ENCODE measurements at regions of chr17 and their contacts with region 1.

Region 1: DNA sequence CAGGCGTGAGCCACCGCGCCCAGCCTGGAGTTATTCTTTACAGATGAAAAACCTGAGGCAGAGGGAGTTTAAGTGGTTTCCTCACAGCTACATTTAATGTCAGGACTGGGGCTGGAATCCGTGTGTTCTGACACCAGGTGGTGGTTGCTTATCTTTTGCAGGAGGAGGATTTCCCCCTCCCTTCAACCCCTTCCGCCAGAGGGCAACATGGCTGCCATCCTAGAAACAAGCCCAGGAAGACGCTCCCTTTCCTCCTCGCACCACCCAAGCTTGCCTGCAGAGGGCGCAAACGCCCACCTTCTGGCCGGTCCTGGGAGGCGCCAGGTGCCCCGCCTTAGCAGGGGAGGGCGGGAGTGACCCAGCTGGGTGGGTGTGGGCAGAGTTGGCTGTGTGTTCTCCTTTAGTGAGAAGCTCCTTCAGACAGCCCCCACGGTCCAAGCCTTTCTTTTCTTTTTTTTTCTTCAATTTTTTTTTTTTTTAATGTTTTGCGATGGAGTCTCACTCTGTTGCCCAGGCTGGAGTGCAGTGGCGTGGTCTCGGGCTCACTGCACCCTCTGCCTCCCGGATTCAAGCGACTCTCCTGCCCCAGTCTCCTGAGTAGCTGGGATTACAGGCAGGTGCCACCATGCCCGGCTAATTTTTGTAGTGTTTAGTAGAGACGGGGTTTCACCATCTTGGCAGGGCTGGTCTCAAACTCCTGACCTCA is 9.9 kb upstream of the RAP1GAP2 start:
- DNase-seq: peak; percentile 86 to 91 (median 87)
- H3K4me3 ChIP-seq: no peak overlapping the region
- H3K4me3 Mint-ChIP-seq: peak overlapping the region in 1 of 7 donors; percentile 32
- H3K27ac ChIP-seq: no peak overlapping the region
- H3K27ac Mint-ChIP-seq: peak overlapping the region in 1 of 8 donors; percentile 20
- H3K4me1 ChIP-seq: peaks cover 17% of the 10 kb centered on the region
- H3K4me1 Mint-ChIP-seq: peaks cover 13 to 18% (median 13%) of the 10 kb centered on the region in 3 donors
- H3K27me3 ChIP-seq: no peaks in the 10 kb centered on the region
- H3K27me3 Mint-ChIP-seq: peaks cover 0 to 2% of the 10 kb centered on the region in 2 donors

Region 2: DNA sequence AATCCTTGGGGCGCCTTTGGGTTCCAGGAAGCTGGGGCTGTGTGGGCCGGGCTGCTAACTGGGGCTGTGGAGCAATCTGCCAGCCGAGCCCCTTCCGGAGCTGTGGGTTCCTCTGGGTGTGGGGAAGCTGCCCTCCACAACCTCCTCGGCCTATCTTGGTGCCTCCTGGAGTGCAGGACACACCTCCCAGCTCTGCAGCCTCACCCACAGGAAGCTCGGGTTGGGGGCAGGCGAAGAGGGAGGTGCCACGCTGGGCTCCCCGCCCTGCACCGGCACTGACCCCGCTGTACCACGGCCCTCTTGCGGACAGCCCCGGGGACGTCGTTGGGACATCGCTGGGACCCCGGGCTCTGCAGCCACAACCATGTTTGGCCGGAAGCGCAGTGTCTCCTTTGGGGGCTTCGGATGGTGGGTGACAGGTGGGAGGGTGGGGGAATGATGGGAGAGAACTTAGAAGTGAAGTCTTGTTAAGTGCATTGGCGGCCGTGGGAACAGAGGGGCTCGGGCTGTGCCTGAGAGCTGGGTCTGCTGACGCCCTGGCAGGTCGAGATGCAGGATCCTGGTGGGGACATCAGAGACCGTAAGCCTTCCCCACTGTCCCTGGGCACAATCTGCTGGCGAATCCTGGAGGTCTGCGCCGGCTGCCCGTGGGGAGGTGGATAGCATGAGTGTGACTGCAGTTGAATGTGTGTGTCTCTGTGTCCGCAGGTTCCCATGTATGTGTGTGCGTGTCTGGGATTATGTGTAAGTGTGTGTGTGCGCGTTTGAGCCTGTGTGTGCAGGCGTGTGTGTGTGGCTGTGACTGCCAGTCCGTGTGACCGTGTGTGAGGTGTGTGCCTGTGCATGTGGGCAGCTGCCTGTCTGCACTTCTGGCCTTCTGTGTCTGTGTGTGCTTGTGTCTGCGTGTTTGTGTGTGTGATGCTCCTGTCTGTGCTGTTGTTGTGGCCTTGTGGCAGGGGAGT is 10.1 kb after region 1 on chr17 and contains the start of gene RAP1GAP2:
- CTCF ChIA-PET with region 1: interaction called, 22 read pairs
- POLR2A ChIA-PET with region 1: no interaction called
- DNase-seq: peak; percentile 64 to 86 (median 78)
- H3K4me3 ChIP-seq: peak within 1 kb of the TSS; percentile 75
- H3K4me3 Mint-ChIP-seq: peak within 1 kb of the TSS; percentile 94 to 98 (median 96)
- H3K27ac ChIP-seq: peak within 1 kb of the TSS; percentile 32
- H3K27ac Mint-ChIP-seq: peak within 1 kb of the TSS; percentile 71 to 89 (median 86)
- H3K4me1 ChIP-seq: peaks cover 60% of the 10 kb centered on the region
- H3K4me1 Mint-ChIP-seq: peaks cover 84 to 91% (median 87%) of the 10 kb centered on the region in 3 donors
- H3K27me3 ChIP-seq: no peaks in the 10 kb centered on the region
- H3K27me3 Mint-ChIP-seq: peaks cover 0 to 5% of the 10 kb centered on the region in 2 donors
- total RNA-seq, gene RAP1GAP2: 1.2 to 1.4 TPM

Region 3: GRCh38 chr17:2814481-2815341 is 28.4 kb after region 1 on chr17:
- CTCF ChIA-PET with region 1: interaction called, 62 read pairs
- POLR2A ChIA-PET with region 1: interaction called, 54 read pairs
- DNase-seq: peak; percentile 90 to 99 (median 98)
- H3K4me3 ChIP-seq: peak overlapping the region; percentile 68
- H3K4me3 Mint-ChIP-seq: peak overlapping the region; percentile 73 to 93 (median 84)
- H3K27ac ChIP-seq: peak overlapping the region; percentile 78
- H3K27ac Mint-ChIP-seq: peak overlapping the region; percentile 83 to 96 (median 91)
- H3K4me1 ChIP-seq: peaks cover 30% of the 10 kb centered on the region
- H3K4me1 Mint-ChIP-seq: peaks cover 33 to 53% (median 45%) of the 10 kb centered on the region in 3 donors
- H3K27me3 ChIP-seq: no peaks in the 10 kb centered on the region
- H3K27me3 Mint-ChIP-seq: no peaks in the 10 kb centered on the region

Region 4: DNA sequence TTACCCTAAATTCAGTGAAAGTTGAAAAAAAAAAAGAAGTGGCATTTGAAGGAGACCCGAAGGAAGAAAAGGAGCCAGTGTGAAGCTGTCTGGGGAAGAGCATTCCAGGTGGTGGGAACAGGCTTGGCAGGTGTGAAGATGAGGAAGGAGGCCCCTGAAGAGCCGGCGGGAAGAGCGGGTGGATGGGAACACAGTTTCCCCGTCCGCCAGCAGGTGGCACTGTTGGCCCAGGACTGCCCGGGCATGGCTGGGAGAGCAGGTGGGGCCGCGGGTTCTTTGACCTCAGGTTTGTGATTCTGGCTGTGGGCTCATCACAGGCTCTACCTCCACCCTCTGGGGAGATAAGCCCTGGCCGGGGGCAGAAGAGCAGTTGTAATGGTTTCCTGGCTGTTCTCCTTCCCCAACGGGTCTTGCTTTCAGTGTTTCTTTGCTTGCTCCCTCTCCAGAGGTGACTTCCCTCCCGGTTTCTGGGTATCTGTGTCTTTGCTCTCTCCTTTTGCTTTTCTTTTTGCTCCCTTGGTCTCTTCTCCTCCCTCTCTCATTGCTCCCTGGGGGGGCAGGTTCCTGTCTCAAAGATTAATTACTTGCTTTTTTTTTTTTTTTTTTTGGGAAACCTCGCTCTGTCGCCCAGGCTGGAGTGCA is 42.2 kb after region 1 on chr17:
- CTCF ChIA-PET with region 1: interaction called, 15 read pairs
- POLR2A ChIA-PET with region 1: interaction called, 5 read pairs
- DNase-seq: peak; percentile 62 to 80 (median 68)
- H3K4me3 ChIP-seq: no peak overlapping the region
- H3K4me3 Mint-ChIP-seq: peak overlapping the region in 6 of 7 donors; percentile 41 to 77 (median 58)
- H3K27ac ChIP-seq: no peak overlapping the region
- H3K27ac Mint-ChIP-seq: peak overlapping the region in 5 of 8 donors; percentile 30 to 73 (median 54)
- H3K4me1 ChIP-seq: peaks cover 13% of the 10 kb centered on the region
- H3K4me1 Mint-ChIP-seq: peaks cover 24 to 42% (median 35%) of the 10 kb centered on the region in 3 donors
- H3K27me3 ChIP-seq: no peaks in the 10 kb centered on the region
- H3K27me3 Mint-ChIP-seq: no peaks in the 10 kb centered on the region

Region 5: DNA sequence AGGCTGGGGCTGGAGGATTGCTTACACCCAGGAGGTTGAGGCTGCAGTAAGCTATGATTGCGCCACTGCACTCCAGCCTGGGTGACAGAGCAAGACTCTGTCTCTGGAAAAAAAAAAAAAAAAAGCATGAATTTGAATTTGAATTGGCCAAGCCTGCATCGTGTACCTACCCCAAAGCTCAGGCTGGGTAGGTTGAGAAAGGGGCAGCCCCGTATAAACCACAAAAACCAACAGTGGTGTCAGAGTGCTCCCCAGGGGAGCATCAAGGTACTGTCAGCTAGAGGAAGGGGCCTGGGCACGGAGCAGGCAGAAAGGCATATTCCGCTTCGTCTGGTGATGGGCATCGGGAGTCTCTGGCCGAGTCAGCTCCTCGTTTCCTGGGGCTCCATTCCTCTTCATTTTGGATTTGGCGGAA is 50.8 kb after region 1 on chr17:
- CTCF ChIA-PET with region 1: interaction called, 28 read pairs
- POLR2A ChIA-PET with region 1: interaction called, 3 read pairs
- DNase-seq: peak in 4 of 5 donors; percentile 18 to 70 (median 52)
- H3K4me3 ChIP-seq: no peak overlapping the region
- H3K4me3 Mint-ChIP-seq: no peak overlapping the region
- H3K27ac ChIP-seq: no peak overlapping the region
- H3K27ac Mint-ChIP-seq: no peak overlapping the region
- H3K4me1 ChIP-seq: no peaks in the 10 kb centered on the region
- H3K4me1 Mint-ChIP-seq: peaks cover 16 to 20% (median 17%) of the 10 kb centered on the region in 3 donors
- H3K27me3 ChIP-seq: no peaks in the 10 kb centered on the region
- H3K27me3 Mint-ChIP-seq: peaks cover 0 to 1% of the 10 kb centered on the region in 2 donors

Region 6: DNA sequence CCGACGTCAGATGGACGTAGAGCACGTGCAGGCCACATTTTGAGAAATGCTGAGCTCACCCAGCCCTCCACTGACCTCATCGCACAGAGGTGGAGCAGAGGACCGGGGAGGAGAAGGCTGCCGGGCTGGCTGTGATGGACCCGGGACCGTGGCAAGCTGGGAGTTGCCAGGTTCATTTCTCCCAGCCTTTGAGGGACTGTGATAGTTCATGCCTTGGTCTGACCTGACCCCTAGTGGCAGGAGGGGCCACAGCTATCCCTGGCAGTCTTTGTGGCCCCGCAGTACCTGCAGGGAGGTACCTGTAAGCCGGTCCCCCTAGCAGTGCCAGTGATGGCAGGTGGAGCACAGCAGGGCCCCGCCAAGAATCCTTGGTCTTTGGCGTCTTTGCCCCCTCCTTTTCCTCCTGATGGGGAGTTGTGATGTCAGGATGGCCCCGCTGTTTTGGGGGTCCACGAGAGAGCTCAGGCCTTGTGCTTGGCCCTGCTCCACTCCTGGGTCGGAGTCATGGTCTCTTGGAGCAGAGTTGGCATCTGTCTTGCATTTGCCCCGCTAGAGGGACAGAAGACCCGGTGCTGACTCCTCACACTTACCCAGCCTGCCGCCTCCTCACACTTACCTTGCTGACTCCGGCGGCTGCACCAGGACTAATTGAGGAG is 226.7 kb after region 1 on chr17:
- CTCF ChIA-PET with region 1: interaction called, 18 read pairs
- POLR2A ChIA-PET with region 1: no interaction called
- DNase-seq: peak; percentile 18 to 73 (median 30)
- H3K4me3 ChIP-seq: no peak overlapping the region
- H3K4me3 Mint-ChIP-seq: no peak overlapping the region
- H3K27ac ChIP-seq: no peak overlapping the region
- H3K27ac Mint-ChIP-seq: no peak overlapping the region
- H3K4me1 ChIP-seq: no peaks in the 10 kb centered on the region
- H3K4me1 Mint-ChIP-seq: no peaks in the 10 kb centered on the region
- H3K27me3 ChIP-seq: no peaks in the 10 kb centered on the region
- H3K27me3 Mint-ChIP-seq: no peaks in the 10 kb centered on the region